HepG2 (cell line): ENCODE measurements at regions of chr3 and their contacts with region 1.

Region 1: DNA sequence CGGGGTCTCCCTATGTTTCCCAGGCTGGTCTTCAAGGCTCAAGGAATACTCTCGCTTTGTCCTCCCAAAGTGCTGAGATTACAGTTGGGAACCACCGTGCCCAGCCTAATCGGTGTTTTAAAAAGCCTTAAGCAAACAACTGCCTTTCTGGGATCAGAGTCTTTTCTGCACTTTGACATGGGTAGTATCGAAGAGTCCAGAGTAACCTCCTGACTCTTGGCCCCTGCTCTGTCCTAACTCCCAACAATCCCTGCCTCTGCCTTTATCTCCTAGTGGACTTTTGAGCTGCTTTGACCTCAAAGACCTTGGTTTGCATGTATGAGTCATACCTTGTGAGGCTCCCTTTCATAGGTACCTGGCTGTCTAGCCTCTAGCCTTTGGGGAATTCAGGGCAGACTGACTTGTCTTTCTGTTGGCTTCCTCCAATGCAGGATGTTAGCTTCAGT is 21.0 kb upstream of the HACD2 start:
- DNase-seq: peak; percentile 99
- ATAC-seq: peak; percentile 84
- H3K4me3 ChIP-seq: peak overlapping the region in 2 of 3 experiments; percentile 24 to 25; a peak in 2 of 6 replicates
- H3K27ac ChIP-seq: peak overlapping the region; percentile 99
- H3K4me1 ChIP-seq: peaks cover 70% of the 10 kb centered on the region
- H3K27me3 ChIP-seq: no peaks in the 10 kb centered on the region
- CTCF ChIP-seq: no peak
- EP300 ChIP-seq: peak; percentile 85 to 96
- POLR2A ChIP-seq: peak in 1 of 2 experiments; percentile 80; a peak in 2 of 4 replicates
- RAD21 ChIP-seq: no peak; the same call in 1 of the 2 replicates

Region 2: DNA sequence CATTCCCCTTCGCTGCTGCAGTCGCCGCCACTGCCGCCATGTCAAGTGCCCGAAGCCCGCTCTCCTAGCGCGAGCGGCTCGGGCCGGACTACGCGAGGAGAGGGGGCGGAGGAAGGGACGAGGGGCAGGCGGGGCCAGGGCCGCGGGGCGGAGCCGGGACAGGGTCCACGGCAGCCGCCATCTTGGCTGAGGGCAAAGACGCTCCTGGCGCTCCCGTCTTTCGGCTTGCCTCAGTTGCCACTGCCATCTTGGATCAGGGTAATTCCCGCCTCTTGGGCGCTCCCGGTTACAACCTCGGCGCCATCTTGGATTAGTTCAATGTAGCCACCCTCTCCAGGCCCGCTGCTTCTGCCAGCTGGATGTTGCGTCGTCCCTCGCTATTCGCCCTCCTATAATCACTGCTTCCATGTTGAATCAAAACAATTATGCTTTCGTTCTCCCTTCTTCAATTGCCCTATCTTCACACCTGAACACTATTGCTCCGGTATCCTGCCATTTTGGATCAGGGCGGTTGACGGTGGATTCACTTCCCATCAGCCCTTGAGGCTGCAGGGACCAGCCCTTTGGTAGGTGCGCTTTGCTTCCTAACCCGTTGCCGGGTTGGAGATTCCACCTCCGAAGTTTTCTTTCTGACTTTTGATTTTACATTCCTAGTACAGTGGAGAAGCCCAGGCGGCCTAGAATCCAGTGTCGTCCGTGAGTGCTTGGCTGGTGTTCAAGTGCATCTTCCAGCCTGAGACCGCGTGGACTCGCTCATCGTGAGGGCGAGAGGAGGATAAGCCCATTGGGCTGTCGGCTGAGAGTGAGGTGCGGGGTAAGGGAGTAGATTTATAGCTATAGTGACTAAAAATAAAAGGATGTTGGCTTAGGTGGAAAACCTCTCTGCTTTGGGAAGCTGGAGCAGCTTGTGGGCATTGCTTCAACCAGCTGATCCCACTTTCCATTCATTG is 20.5 kb before region 1 on chr3 and contains the start of gene HACD2:
- CTCF ChIA-PET with region 1: no interaction called
- POLR2A ChIA-PET with region 1: interaction called, 88 read pairs
- in situ Hi-C with region 1: no loop called
- intact Hi-C with region 1: loop called (anchors 1 kb)
- DNase-seq: peak; percentile 94
- ATAC-seq: peak; percentile 95
- H3K4me3 ChIP-seq: peak within 1 kb of the TSS; percentile 89 to 98 (median 91)
- H3K27ac ChIP-seq: peak within 1 kb of the TSS; percentile 97
- H3K4me1 ChIP-seq: peaks cover 45% of the 10 kb centered on the region
- H3K27me3 ChIP-seq: no peaks in the 10 kb centered on the region; a peak in 1 of 5 replicates
- CTCF ChIP-seq: no peak
- EP300 ChIP-seq: no peak
- POLR2A ChIP-seq: peak; percentile 65 to 90
- RAD21 ChIP-seq: peak; percentile 33; the same call in 1 of the 2 replicates
- total RNA-seq, gene HACD2: 36.0 and 47.0 TPM in 2 replicates

Region 3: GRCh38 chr3:123618768-123619484 is 13.1 kb after region 1 on chr3:
- CTCF ChIA-PET with region 1: no interaction called
- POLR2A ChIA-PET with region 1: interaction called, 13 read pairs
- in situ Hi-C with region 1: no loop called
- intact Hi-C with region 1: loop called (anchors 1 kb)
- DNase-seq: no peak
- ATAC-seq: no peak
- H3K4me3 ChIP-seq: no peak overlapping the region
- H3K27ac ChIP-seq: no peak overlapping the region
- H3K4me1 ChIP-seq: peaks cover 37% of the 10 kb centered on the region
- H3K27me3 ChIP-seq: no peaks in the 10 kb centered on the region
- CTCF ChIP-seq: no peak
- EP300 ChIP-seq: no peak
- POLR2A ChIP-seq: no peak
- RAD21 ChIP-seq: no peak

Region 4: GRCh38 chr3:123636431-123636841 is 30.6 kb after region 1 on chr3:
- CTCF ChIA-PET with region 1: no interaction called
- POLR2A ChIA-PET with region 1: interaction called, 15 read pairs
- in situ Hi-C with region 1: no loop called
- intact Hi-C with region 1: loop called (anchors 2 kb)
- DNase-seq: no peak
- ATAC-seq: no peak
- H3K4me3 ChIP-seq: no peak overlapping the region
- H3K27ac ChIP-seq: no peak overlapping the region
- H3K4me1 ChIP-seq: peaks cover 49% of the 10 kb centered on the region
- H3K27me3 ChIP-seq: no peaks in the 10 kb centered on the region
- CTCF ChIP-seq: no peak
- EP300 ChIP-seq: no peak
- POLR2A ChIP-seq: no peak
- RAD21 ChIP-seq: no peak

Region 5: GRCh38 chr3:123642182-123642956 is 36.6 kb after region 1 on chr3:
- CTCF ChIA-PET with region 1: no interaction called
- POLR2A ChIA-PET with region 1: interaction called, 15 read pairs
- in situ Hi-C with region 1: no loop called
- intact Hi-C with region 1: loop called (anchors 2 kb)
- DNase-seq: peak; percentile 95
- ATAC-seq: peak; percentile 99
- H3K4me3 ChIP-seq: no peak overlapping the region
- H3K27ac ChIP-seq: peak overlapping the region; percentile 16
- H3K4me1 ChIP-seq: peaks cover 19% of the 10 kb centered on the region
- H3K27me3 ChIP-seq: no peaks in the 10 kb centered on the region
- CTCF ChIP-seq: peak; percentile 89
- EP300 ChIP-seq: no peak
- POLR2A ChIP-seq: no peak
- RAD21 ChIP-seq: peak; percentile 87